ENCODE measurements at regions of chr4 and their contacts with region 1.

Region 1: GRCh38 chr4:141307241-141307689 is 86.6 kb downstream of the ZNF330 start:
- DNase-seq: peak; percentile 46
- H3K4me3 ChIP-seq: no peak overlapping the region
- H3K27ac ChIP-seq: no peak overlapping the region
- H3K4me1 ChIP-seq: no peaks in the 10 kb centered on the region
- H3K27me3 ChIP-seq: no peaks in the 10 kb centered on the region
- CTCF ChIP-seq: peak; percentile 70

Region 2: GRCh38 chr4:141711014-141711610 is 403.8 kb after region 1 on chr4:
- CTCF ChIA-PET with region 1: no interaction called
- POLR2A ChIA-PET with region 1: no interaction called
- intact Hi-C with region 1: loop called (anchors 5 kb)
- DNase-seq: peak; percentile 9
- H3K4me3 ChIP-seq: no peak overlapping the region
- H3K27ac ChIP-seq: no peak overlapping the region
- H3K4me1 ChIP-seq: no peaks in the 10 kb centered on the region
- H3K27me3 ChIP-seq: no peaks in the 10 kb centered on the region
- CTCF ChIP-seq: peak; percentile 57

Region 3: GRCh38 chr4:142846729-142847596 is 1539.7 kb after region 1 on chr4:
- CTCF ChIA-PET with region 1: no interaction called
- POLR2A ChIA-PET with region 1: no interaction called
- intact Hi-C with region 1: loop called (anchors 10 kb)
- DNase-seq: no peak
- H3K4me3 ChIP-seq: peak overlapping the region; percentile 44
- H3K27ac ChIP-seq: no peak overlapping the region
- H3K4me1 ChIP-seq: no peaks in the 10 kb centered on the region
- H3K27me3 ChIP-seq: peaks cover 65% of the 10 kb centered on the region
- CTCF ChIP-seq: 0 out of 2 replicates have a peak, but pooled peaks have one; percentile 13

Region 4: DNA sequence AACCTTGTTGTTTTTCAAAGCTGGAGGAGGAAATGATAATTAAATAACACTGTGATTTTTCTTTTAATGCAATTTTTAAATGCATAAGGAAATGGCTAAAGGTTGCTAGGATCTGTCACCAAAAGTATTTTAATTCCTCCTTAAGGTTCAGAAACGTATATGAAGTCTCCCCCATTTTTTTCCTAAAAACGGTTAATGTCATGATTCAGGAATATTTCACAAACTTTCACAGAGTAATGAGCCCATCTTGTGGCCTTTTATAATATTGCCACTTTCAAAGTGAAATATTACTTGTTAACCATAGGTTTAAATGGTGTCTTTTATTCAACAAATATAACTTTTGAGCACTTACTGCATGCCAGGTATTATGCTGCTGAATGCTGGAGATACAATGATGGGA is 1778.0 kb after region 1 on chr4:
- CTCF ChIA-PET with region 1: no interaction called
- POLR2A ChIA-PET with region 1: no interaction called
- intact Hi-C with region 1: loop called (anchors 5 kb)
- DNase-seq: peak; percentile 14
- H3K4me3 ChIP-seq: no peak overlapping the region
- H3K27ac ChIP-seq: no peak overlapping the region
- H3K4me1 ChIP-seq: no peaks in the 10 kb centered on the region
- H3K27me3 ChIP-seq: no peaks in the 10 kb centered on the region
- CTCF ChIP-seq: peak; percentile 43

Measured in A673 (cell line).